ENCODE measurements at regions of chr17 and their contacts with region 1.

Region 1: DNA sequence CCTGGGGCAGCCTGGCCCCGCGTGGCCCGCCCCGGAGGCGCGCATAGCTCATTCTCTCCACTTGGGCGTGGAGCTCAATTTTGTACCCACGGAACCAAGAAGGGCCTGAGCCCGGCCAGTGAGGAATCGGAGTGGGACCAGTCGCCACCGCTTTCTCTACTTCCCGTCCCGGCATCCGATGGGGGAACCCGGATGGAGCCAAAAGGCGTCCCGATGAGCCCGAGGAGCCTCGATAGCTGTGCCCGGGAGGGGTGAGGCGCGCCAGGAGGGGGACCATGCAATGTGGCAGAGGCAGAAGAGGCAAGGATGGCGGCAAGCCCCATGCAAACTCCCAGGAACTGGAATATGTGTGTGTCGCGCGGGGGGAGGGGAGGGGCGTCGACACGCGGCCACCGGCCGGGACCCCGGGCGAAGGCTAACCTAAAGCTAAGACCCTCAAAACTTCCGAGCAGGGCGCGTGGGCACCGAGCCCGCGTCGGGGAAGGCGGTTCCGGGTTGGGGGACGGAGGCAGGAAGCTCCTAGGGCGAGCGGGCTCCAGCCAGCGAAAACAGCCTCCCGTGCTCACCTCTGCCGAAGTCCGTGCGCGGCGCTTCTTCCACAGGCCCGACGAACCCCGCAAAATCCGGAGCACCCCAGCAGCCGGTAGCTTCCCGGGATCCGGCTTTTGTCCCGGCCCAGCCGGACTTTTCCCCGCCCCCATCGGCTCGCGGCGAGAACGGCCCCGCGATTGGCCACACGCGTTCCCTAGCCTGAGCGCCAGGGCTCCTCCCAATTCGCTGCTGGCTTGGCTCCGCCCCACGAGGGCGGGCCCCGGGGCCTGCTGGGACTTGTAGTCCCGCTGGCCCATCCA is at the start of gene ACLY:
- DNase-seq: peak; percentile 98
- ATAC-seq: peak; percentile 99
- H3K4me3 Mint-ChIP-seq: peak within 1 kb of the TSS; percentile 90
- H3K27ac Mint-ChIP-seq: peak within 1 kb of the TSS; percentile 80
- H3K4me1 Mint-ChIP-seq: peaks cover 37% of the 10 kb centered on the region
- H3K27me3 Mint-ChIP-seq: no peaks in the 10 kb centered on the region
- total RNA-seq, gene ACLY: 189 to 192 TPM

Region 2: GRCh38 chr17:41153856-41154255 is 764.7 kb before region 1 on chr17:
- CTCF ChIA-PET with region 1: no interaction called
- POLR2A ChIA-PET with region 1: no interaction called
- intact Hi-C with region 1: no loop called
- DNase-seq: no peak
- ATAC-seq: no peak
- H3K4me3 Mint-ChIP-seq: no peak overlapping the region
- H3K27ac Mint-ChIP-seq: no peak overlapping the region
- H3K4me1 Mint-ChIP-seq: no peaks in the 10 kb centered on the region
- H3K27me3 Mint-ChIP-seq: peaks cover 4% of the 10 kb centered on the region

Region 3: GRCh38 chr17:41688699-41689496 is 229.6 kb before region 1 on chr17 and contains the start of gene EIF1:
- CTCF ChIA-PET with region 1: interaction called, 3 read pairs
- POLR2A ChIA-PET with region 1: interaction called, 8 read pairs
- intact Hi-C with region 1: loop called in 1 of 2 experiments (anchors 1 kb)
- DNase-seq: peak; percentile 100
- ATAC-seq: peak; percentile 81
- H3K4me3 Mint-ChIP-seq: peak within 1 kb of the TSS; percentile 97
- H3K27ac Mint-ChIP-seq: peak within 1 kb of the TSS; percentile 95
- H3K4me1 Mint-ChIP-seq: peaks cover 20% of the 10 kb centered on the region
- H3K27me3 Mint-ChIP-seq: no peaks in the 10 kb centered on the region
- total RNA-seq, gene EIF1: 869 to 977 TPM

Region 4: GRCh38 chr17:41739661-41740352 is 178.7 kb before region 1 on chr17:
- CTCF ChIA-PET with region 1: no interaction called
- POLR2A ChIA-PET with region 1: no interaction called
- intact Hi-C with region 1: no loop called
- DNase-seq: no peak
- ATAC-seq: no peak
- H3K4me3 Mint-ChIP-seq: no peak overlapping the region
- H3K27ac Mint-ChIP-seq: no peak overlapping the region
- H3K4me1 Mint-ChIP-seq: peaks cover 5% of the 10 kb centered on the region
- H3K27me3 Mint-ChIP-seq: peaks cover 21% of the 10 kb centered on the region

Region 5: DNA sequence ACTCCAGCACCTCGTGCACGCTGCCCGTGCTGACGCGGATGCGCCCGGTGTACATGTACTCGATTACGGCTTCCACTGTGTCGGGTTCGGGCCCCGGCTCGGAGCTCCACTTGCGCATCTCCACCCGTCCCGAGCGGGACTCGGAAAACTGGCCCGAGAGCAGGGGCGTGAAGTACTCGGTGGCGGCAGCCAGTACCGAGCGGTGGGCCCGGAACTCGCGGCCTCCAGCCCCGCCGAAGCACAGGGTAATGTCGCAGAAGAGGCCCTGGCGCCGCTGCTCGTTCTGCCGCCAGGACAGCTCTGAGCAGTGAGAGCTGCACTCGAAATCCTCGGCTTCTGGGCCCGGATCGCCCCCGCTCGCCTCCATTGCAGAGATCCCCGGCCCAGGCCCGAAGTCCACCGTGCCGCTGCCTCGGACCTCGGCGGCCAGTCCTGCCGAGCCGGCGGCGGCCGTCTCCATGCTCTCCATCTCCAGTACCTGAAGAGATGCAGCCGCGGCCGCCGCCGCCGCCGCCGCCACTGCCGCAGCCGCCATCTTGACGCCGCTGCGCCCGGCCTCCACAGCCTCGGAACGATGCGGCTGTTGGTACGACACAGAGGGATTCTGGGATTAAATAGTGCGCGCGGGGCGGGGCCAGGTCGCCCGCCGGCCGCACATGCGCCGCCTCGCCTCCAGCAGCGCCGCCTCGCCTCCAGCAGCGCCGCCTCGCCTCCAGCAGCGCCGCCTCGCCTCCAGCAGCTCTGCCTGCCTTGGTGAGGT is 53.5 kb before region 1 on chr17 and contains the start of gene KLHL11:
- CTCF ChIA-PET with region 1: interaction called, 3 read pairs
- POLR2A ChIA-PET with region 1: interaction called, 5 read pairs
- intact Hi-C with region 1: loop called (anchors 1 to 2 kb)
- DNase-seq: peak; percentile 94
- ATAC-seq: peak; percentile 88
- H3K4me3 Mint-ChIP-seq: no peak within 1 kb of the TSS
- H3K27ac Mint-ChIP-seq: peak within 1 kb of the TSS; percentile 68
- H3K4me1 Mint-ChIP-seq: peaks cover 49% of the 10 kb centered on the region
- H3K27me3 Mint-ChIP-seq: no peaks in the 10 kb centered on the region
- total RNA-seq, gene KLHL11: 16.4 to 18.0 TPM

Region 6: DNA sequence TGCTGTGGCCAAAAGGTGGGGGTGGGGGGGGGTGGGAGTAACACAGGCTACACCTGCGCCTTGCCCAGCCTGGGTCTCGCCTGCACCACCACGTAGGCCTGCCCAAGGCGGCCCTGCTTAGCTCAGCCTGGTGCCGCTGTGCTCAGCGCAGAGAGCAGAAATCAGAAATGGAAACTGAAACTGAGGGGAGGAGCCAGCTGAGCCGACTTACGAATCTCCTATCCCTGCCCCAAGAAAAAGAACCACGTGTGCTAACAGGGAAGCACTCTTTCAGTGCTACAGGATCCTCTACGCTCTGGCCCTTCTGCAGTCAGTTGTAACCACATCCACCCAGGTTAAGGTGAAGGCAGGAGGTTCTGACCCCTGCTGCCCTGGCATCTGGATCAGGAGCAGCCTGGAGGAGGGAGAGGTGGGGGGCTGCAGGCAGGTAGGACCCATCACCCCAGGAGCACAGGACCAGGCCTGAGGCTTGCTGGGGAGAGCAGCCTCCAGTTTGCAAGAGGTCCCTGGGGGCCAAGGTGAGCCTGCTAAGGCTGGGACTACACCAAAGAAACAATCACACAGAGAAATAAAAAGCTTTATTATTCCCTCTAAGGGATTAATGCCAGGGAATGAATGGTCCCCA is 194.1 kb after region 1 on chr17 and contains the start of gene DHX58:
- CTCF ChIA-PET with region 1: no interaction called
- POLR2A ChIA-PET with region 1: no interaction called
- intact Hi-C with region 1: loop called in 1 of 2 experiments (anchors 2 kb)
- DNase-seq: peak; percentile 89
- ATAC-seq: peak; percentile 86
- H3K4me3 Mint-ChIP-seq: peak within 1 kb of the TSS; percentile 77
- H3K27ac Mint-ChIP-seq: peak within 1 kb of the TSS; percentile 97
- H3K4me1 Mint-ChIP-seq: peaks cover 35% of the 10 kb centered on the region
- H3K27me3 Mint-ChIP-seq: no peaks in the 10 kb centered on the region
- total RNA-seq, gene DHX58: 23.8 to 31.1 TPM

Region 7: DNA sequence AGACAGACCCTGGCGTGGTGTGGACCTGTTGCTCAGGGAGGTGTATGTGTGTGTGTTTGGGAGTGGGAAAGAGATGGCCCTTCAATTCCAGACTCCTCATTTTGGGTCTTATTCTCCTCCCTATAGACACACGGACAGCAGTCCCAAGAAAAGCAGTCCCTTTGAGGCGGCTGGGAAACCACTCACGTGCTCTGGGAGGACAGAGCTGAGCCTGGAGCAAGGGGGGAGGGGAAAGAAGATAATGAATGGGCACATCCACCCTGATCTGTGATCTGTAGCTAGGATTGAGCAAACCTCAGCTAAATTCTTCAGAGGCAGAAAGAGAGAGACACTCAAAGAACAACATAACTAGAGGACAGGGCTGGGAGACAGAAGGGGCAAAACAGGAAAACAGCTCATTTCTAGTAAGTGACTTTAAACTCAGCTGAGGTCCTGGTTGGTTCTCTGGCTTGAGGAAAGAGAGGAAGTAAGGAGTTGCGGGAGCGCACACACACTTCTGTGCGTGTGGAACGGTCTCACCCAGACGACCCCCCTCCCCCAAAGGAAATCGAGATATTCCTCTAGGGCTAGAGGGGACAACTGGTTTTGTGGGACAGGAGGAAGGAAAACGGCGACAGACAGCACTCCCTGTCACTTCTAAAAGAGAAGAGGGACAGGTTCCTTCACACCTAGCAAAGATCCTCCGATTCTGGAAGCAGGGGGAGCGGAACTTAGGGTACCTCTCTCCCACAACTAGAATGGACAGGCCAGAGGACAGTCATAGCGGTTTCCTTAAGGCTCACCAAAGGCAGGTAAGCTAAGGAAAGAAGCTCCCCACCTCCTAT is 235.6 kb after region 1 on chr17:
- CTCF ChIA-PET with region 1: no interaction called
- POLR2A ChIA-PET with region 1: no interaction called
- intact Hi-C with region 1: loop called in 1 of 2 experiments (anchors 1 kb)
- DNase-seq: no peak
- ATAC-seq: no peak
- H3K4me3 Mint-ChIP-seq: peak overlapping the region; percentile 97
- H3K27ac Mint-ChIP-seq: peak overlapping the region; percentile 93
- H3K4me1 Mint-ChIP-seq: peaks cover 31% of the 10 kb centered on the region
- H3K27me3 Mint-ChIP-seq: no peaks in the 10 kb centered on the region